Posterior cingulate gyrus (tissue), 11 donors: ENCODE measurements at regions of chr2 and their contacts with region 1.

Region 1: DNA sequence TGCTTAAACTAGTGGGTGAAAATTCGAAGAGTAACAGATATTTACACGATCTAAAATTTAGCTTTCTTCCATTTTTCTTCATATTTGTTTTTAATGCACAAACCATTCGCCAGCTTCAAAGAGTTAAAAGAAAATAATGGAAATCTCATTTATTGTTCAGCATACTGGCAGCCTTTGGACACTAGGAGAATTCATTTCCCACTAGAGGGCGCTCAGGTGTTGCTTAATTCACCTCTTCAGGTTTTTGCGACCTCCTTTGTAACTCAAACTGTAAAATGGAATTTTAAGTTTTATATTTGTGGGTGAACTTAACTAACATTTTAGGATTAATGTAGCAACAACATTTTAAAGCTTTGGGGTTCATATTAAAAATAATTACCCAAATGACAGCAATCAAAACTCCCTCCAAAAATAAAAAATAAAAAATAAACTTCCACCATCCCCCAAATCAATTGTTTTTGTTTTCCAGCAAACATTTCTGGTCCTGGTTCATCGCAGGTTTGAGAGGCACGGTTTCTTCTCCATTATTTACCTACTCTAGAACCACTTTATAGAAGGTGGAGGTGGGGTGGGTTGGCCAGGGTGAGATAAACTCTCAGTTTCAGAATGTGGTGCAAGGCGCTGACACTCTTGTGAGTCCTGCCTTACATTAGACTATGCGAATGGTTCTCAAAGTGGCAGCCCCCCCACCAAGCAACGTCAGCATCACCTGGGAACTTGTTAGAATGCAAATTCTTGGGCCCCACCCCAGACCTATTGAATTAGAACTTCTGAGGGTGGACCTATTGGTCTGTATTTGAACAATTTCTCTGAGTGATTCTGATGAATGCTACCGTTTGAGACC is 24.7 kb upstream of the PNPT1 start:
- DNase-seq: peak in 4 of 10 donors; percentile 41 to 59 (median 45)

Region 2: DNA sequence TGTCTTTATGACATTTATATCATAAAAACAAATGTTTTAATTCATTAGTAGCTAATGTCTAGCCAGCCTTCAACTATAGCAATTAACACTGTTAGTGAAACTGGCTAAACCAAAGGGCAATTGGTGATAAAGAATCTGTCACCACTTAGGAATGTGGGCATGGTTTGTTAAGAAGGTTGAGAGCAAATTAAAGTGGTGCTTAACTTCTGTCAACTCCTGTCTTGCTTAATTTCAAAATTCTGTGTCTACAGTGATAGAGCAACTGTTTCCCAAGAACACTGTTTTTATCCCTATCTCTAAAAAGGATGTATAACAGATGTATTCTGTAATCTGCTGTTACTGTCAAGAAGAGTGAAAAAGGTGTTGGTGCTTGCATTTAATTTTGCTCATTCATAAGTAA is 162.4 kb before region 1 on chr2:
- intact Hi-C with region 1: no loop called
- DNase-seq: no peak

Region 3: GRCh38 chr2:55703350-55703749 is 15.0 kb before region 1 on chr2:
- intact Hi-C with region 1: no loop called
- DNase-seq: no peak

Region 4: DNA sequence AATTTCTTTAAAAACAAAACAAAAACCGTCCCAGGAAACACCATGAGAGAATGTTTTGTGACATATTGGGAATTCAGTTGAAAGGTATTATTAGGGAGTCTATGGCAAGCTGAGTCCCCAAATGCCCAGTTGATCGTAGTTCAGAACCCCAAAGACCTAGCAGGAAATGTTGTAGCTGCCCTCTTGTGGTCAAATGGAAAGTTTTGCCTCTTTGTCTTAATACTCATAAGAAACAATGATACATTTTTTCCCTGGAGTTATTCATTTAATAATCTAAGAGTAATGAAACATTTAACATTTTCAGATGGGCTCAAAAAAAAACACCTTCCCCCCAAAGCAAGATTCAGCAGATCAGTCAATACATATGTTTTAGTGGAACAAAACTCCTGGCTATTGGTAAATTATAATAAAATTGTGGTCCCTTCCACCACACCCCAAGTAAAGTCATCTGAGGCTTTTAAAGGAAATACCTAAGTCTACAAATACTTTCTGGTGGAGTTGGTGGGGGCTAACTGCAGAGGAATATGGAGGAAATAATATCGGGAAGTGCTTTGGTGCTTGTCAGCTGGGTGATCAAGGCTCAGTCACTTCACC is 243.0 kb after region 1 on chr2:
- intact Hi-C with region 1: loop called (anchors 2 kb)
- DNase-seq: peak in 1 of 10 donors; percentile 2

Region 5: DNA sequence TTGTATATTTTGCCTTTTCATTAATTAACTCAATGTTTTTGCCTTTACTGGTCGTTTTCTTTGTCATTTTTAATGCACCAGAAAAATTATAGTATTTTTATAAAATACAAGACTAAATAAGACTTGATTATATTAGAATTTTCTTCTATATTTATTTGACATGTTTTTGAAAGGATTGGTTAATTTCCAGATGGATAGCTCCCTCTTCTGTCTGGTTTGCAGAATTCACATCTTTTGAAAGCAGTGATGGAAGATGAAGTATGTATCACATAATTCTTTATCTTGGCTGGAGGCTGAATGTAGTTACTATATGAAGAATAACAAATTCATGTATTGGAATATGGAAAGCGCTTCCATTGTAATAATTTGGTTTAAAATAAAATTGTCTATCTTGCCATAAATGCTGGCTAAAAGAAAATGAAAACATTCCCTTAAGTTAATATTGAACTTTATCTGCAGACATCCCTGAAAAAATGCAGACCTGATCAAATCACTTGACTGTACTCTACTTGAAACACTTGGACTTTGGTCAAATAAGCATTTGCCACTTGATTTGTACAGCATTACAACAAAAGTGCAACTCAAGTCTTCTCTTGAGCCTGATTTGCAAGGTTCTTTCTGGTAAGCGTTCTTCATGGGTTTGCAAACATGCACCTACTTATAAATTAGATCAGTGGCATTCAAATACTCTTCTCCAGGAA is 291.5 kb after region 1 on chr2:
- intact Hi-C with region 1: loop called (anchors 1 kb)
- DNase-seq: no peak